ENCODE measurements at regions of chr19 and their contacts with region 1.

Region 1: DNA sequence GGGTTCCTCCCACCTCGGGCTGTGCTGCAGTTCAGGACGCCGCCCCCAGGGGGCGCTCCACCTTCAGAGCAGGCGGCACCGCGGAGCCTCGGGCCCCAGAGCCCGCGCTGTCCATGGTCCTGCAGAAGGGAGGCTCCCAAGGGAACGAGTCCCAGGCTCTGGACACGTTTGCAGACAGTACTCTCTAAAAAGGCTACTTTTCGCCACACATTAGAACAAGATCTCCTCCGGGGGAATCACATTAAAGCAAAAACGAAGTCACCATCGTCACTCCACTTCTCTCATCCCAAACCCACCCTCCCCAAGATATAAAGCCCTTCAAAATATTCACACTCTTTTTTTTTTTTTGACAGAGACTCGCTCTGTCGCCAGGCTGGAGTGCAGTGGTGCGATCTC is 4.6 kb upstream of the SIGLEC10 start:
- DNase-seq: peak; percentile 67
- H3K4me3 ChIP-seq: no peak overlapping the region
- H3K27ac ChIP-seq: no peak overlapping the region
- H3K4me1 ChIP-seq: no peaks in the 10 kb centered on the region
- H3K27me3 ChIP-seq: no peaks in the 10 kb centered on the region
- CTCF ChIP-seq: peak; percentile 99
- POLR2A ChIP-seq: no peak

Region 2: GRCh38 chr19:51393959-51394836 is 27.9 kb before region 1 on chr19:
- CTCF ChIA-PET with region 1: interaction called, 6 read pairs
- POLR2A ChIA-PET with region 1: no interaction called
- dilution Hi-C with region 1: no loop called
- intact Hi-C with region 1: loop called (anchors 2 kb)
- DNase-seq: peak; percentile 91
- H3K4me3 ChIP-seq: peak overlapping the region in 2 of 3 experiments; percentile 25 to 40
- H3K27ac ChIP-seq: peak overlapping the region; percentile 28
- H3K4me1 ChIP-seq: peaks cover 8% of the 10 kb centered on the region
- H3K27me3 ChIP-seq: no peaks in the 10 kb centered on the region
- CTCF ChIP-seq: no peak
- POLR2A ChIP-seq: peak; percentile 27

Region 3: DNA sequence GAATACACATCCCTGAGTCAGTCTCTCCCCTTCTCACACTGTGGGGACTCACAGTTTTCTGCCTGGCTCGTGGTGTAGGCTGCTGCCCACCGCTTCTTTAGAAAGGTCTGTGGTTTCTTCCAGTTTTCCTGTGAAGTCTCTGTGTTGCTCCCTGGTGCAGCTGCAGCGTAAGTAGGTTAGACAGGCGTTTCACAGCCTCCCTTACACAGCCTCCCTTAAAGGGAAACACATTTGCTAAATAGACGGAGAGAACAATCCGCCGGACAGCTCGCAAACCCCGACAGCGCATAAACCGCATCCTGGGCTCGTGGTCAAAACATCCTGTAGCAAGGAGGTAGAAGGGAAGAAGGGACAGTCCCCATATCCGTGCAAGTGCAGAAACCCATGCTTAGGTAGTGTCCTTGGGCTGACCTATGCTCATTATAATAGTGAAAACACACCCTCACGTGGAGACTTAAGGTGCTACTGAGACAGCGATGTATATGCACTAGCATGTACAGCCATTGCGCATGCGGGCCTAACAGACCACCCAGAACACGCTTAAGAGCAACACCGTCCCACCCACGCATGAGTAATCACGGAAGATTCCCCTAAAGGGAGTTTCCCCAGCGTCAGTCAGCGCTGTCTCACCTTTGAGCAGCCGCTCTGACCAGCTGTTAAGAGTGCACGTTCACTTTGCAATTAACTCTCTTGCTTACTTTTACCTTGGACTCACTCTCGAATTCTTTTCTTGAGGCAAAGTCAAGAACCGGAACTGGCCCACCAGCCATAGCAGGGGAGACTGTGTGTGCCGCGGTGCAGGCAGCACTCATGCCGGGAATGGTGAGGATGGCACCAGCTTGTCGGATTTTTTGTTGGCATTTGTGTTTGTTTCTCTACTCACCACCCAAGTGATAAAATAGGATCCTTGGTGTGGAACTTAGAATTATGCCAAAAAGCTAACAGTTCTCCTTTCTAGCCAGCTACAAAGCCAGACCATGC is 19.6 kb after region 1 on chr19:
- CTCF ChIA-PET with region 1: interaction called, 11 read pairs
- POLR2A ChIA-PET with region 1: no interaction called
- dilution Hi-C with region 1: no loop called
- intact Hi-C with region 1: no loop called
- DNase-seq: no peak
- H3K4me3 ChIP-seq: no peak overlapping the region
- H3K27ac ChIP-seq: no peak overlapping the region
- H3K4me1 ChIP-seq: no peaks in the 10 kb centered on the region
- H3K27me3 ChIP-seq: no peaks in the 10 kb centered on the region
- CTCF ChIP-seq: no peak
- POLR2A ChIP-seq: no peak

Region 4: DNA sequence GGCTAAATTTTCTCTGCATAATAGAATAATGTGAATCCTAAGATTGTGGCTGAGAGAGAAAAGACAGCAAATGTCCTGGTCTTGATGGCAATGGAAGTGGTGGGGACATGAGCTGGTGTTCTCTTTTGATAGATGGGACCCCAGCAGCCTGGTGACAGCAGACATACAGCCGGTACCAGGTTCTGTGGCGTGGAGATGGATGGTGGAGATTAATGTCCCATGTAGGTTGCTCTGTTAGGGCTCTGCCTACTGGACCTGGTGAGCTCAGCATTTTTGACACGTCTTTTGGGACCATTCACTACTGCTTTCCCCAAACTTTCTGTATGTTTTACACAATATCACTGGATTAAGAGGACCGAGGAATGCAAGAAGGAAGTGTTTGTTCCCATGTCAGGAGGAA is 232.7 kb after region 1 on chr19:
- CTCF ChIA-PET with region 1: interaction called, 138 read pairs
- POLR2A ChIA-PET with region 1: no interaction called
- dilution Hi-C with region 1: no loop called
- intact Hi-C with region 1: loop called (anchors 1 kb)
- DNase-seq: no peak
- H3K4me3 ChIP-seq: no peak overlapping the region
- H3K27ac ChIP-seq: no peak overlapping the region
- H3K4me1 ChIP-seq: peaks cover 2% of the 10 kb centered on the region
- H3K27me3 ChIP-seq: no peaks in the 10 kb centered on the region
- CTCF ChIP-seq: no peak
- POLR2A ChIP-seq: no peak

Measured in endothelial cell of umbilical vein (primary cell).